ENCODE measurements at regions of chr12 and their contacts with region 1.

Region 1: DNA sequence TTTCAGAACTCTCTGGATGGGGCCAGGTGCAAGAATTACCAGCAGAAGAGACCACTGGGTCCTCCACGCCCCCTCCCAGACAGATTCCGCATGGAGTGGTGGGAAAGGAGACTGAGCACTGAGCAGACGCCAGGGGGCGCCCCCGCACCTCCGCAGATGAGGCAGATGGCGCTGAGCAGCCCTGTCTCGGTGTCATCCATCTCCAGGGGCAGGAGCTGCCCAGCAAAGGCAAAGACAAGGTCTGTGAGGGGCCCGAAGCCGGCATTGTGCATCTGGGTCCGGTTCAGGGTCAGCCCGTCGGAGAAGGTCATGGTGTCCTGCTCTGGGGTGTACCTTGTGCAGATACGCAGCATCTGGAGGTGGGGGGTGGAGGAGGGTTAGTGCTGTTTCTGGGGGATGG is 6.3 kb upstream of the ITGB7 start:
- DNase-seq: peak in 3 of 4 donors; percentile 82 to 97 (median 86)
- ATAC-seq: peak; percentile 68
- H3K4me3 ChIP-seq: no peak overlapping the region
- H3K27ac ChIP-seq: no peak overlapping the region
- H3K4me1 ChIP-seq: peaks cover 23 to 66% of the 10 kb centered on the region in 2 donors
- H3K27me3 ChIP-seq: no peaks in the 10 kb centered on the region
- CTCF ChIP-seq: peak; percentile 92 to 94

Region 2: DNA sequence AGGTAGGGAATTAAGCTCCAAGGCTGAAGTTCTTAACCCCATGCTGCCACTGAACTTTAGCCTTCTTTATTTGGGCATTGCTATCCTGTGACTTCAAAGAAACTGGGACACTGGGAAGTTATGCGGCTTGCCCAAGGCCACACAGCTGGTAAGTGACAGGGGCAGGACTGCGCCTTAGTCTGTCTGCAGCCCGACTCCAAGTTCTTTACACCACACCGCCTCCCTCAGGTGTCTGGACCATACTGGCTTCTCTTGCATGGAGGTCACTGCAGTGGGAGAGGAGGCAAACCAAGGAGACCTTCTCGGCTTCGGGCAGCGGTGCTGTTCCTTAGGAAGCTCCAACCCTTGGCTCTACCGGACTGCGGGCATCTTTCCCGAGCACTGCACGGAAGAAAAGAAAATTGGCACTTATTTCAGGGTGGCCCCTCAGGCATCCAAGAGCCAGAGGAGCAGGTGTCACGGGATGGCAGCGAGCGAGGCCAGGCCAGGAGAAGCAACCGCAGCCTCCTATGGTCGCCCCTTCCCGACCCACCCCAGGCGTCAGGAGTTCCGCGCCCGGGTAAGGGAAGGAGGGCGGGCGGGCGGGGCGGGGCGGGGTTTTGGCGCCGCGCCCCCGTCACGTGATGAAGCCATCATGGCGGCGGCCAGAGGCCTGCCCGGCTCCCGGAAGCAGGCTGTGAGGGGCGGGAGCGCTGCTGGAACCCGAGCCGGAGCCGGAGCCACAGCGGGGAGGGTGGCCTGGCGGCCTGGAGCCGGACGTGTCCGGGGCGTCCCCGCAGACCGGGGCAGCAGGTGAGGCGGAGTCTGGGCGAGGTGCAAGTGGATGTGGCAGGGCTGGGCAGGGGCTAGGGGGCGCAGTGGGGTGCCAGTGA is 38.4 kb after region 1 on chr12:
- intact Hi-C with region 1: no loop called
- DNase-seq: peak; percentile 69 to 95 (median 82)
- ATAC-seq: peak; percentile 91
- H3K4me3 ChIP-seq: peak overlapping the region; percentile 89 to 92
- H3K27ac ChIP-seq: peak overlapping the region; percentile 86 to 90
- H3K4me1 ChIP-seq: peaks cover 16 to 41% of the 10 kb centered on the region in 2 donors
- H3K27me3 ChIP-seq: no peaks in the 10 kb centered on the region
- CTCF ChIP-seq: peak; percentile 12 to 16

Region 3: DNA sequence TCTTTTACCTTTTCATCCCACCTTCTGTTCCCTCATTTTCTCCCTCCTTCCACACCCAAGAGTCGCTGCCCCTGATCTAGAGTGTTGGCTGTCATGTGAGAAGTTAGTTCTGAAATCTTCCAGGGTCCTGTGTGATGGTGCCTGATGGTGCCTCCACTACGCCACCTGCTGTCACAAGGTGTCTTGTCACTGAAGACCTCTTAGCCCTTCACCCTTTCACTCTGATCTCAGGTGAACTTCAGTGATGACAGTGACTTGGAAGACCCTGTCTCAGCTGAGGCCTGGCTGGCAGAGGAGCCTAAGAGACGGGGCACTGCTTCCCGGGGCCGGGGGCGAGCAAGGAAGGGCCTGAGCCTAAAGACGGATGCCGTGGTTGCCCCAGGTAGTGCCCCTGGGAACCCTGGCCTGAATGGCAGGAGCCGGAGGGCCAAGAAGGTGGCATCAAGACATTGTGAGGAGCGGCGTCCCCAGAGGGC is 74.4 kb after region 1 on chr12:
- intact Hi-C with region 1: loop called in 1 of 2 experiments (anchors 2 kb)
- DNase-seq: peak in 3 of 4 donors; percentile 51 to 77 (median 65)
- ATAC-seq: peak; percentile 90
- H3K4me3 ChIP-seq: no peak overlapping the region
- H3K27ac ChIP-seq: no peak overlapping the region
- H3K4me1 ChIP-seq: peaks cover 0 to 2% of the 10 kb centered on the region in 2 donors
- H3K27me3 ChIP-seq: no peaks in the 10 kb centered on the region
- CTCF ChIP-seq: peak; percentile 52 to 65

Region 4: GRCh38 chr12:53892760-53893159 is 679.4 kb after region 1 on chr12:
- intact Hi-C with region 1: no loop called
- DNase-seq: no peak
- ATAC-seq: no peak
- H3K4me3 ChIP-seq: no peak overlapping the region
- H3K27ac ChIP-seq: no peak overlapping the region
- H3K4me1 ChIP-seq: no peaks in the 10 kb centered on the region
- H3K27me3 ChIP-seq: peaks cover 11 to 72% of the 10 kb centered on the region in 2 donors
- CTCF ChIP-seq: no peak

Measured in left lung (tissue), 14 donors.